ENCODE measurements at regions of chr5 and their contacts with region 1.

Region 1: DNA sequence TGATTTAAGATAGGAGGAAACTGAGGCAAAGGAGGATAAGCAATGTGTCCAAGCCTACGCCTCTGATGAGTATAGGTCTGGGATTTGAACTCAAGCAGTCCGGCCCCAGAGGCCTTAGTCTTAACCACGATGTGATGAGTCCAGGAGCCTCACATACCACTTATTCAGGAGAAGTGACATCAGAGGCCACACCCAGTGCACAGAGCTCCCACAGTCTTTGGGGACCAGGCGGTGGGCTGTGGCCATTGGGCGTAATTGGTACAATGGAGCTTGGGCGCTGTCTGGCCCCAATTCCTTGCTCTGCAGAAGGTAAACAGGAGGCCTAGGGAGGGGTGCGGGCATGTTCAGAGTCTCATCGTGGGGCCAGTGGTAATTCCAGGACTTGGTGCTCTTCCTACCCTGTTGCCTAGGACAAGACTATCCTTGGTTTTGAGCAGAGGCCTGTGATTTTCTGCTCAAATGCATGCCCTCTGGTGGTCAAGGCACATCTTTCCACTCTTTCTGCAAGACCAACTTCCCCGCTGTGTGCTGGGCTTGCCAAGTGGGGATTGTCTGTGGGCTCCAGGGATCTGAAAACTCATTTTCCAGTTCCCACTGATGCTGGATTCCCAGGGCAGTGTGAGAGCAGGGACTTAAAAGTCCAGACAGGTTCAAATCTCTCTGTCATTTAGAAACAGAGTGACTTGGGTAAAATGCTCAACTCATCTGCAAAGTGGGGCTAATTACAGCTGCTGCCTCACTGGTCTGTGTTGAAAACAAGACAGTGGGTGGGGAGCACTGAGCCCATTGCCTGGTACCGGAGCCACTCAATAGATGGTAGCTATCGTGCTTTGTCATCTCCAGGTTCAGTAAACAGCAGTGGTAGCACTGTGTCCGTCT is 15.8 kb downstream of the NDST1 start:
- DNase-seq: peak; percentile 45
- H3K4me3 ChIP-seq: no peak overlapping the region
- H3K27ac ChIP-seq: peak overlapping the region; percentile 73 to 80 (median 76)
- H3K4me1 ChIP-seq: peaks cover 26 to 45% (median 27%) of the 10 kb centered on the region in 4 donors
- H3K27me3 ChIP-seq: no peaks in the 10 kb centered on the region
- CTCF ChIP-seq: peak; percentile 51 to 73 (median 56)
- EP300 ChIP-seq: no peak
- POLR2A ChIP-seq: no peak

Region 2: DNA sequence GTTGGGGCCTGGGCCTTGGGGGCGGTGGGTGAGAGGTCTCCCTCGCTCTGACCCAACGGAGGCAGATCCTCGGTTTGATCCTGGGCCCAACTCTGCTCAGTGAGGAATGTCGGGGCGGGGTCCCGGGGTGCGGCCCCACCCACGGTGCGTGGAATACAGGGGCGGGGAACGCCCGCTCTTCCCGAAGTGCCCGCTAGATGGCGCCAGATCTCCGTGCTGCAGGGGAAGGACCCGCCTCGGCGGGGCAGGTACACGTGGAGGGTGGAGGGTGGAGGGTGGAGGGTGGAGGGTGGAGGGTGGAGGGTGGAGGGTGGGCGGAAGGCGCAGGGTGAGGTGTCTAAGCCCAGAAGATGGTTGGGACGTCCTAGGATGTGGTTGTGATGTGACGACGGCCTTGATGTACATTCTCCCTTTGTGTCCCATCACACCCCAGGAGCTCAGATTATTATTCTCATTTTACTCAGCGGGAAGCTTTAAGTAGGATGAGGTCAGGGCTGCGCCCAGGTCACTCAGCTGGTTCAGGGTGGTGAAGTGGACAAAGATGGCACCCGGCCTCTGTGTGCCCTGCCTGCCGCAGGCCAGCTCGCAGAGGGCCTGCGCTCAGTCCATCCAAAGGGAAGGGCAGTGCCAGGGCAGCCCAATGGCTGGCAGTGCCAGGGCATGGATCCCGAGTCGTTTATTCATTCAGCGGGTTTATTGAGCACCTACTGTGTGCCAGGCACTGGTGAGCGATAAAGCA is 64.7 kb before region 1 on chr5:
- in situ Hi-C with region 1: no loop called
- intact Hi-C with region 1: loop called (anchors 5 kb)
- DNase-seq: peak; percentile 89
- H3K4me3 ChIP-seq: peak overlapping the region in 1 of 4 donors; percentile 18
- H3K27ac ChIP-seq: peak overlapping the region in 1 of 4 donors; percentile 23
- H3K4me1 ChIP-seq: peaks cover 0 to 17% (median 7%) of the 10 kb centered on the region in 4 donors
- H3K27me3 ChIP-seq: no peaks in the 10 kb centered on the region
- CTCF ChIP-seq: peak; percentile 79 to 92 (median 88)
- EP300 ChIP-seq: no peak
- POLR2A ChIP-seq: no peak

Region 3: GRCh38 chr5:150513375-150514309 is 10.1 kb before region 1 on chr5:
- in situ Hi-C with region 1: no loop called
- intact Hi-C with region 1: loop called (anchors 1 kb)
- DNase-seq: no peak
- H3K4me3 ChIP-seq: no peak overlapping the region
- H3K27ac ChIP-seq: peak overlapping the region; percentile 8 to 92 (median 84)
- H3K4me1 ChIP-seq: peaks cover 56 to 86% (median 77%) of the 10 kb centered on the region in 4 donors
- H3K27me3 ChIP-seq: no peaks in the 10 kb centered on the region
- CTCF ChIP-seq: peak in 2 of 5 experiments; percentile 23 to 32
- EP300 ChIP-seq: no peak
- POLR2A ChIP-seq: no peak